CD8-positive, alpha-beta memory T cell (primary cell): ENCODE measurements at regions of chrX and their contacts with region 1.

Region 1: DNA sequence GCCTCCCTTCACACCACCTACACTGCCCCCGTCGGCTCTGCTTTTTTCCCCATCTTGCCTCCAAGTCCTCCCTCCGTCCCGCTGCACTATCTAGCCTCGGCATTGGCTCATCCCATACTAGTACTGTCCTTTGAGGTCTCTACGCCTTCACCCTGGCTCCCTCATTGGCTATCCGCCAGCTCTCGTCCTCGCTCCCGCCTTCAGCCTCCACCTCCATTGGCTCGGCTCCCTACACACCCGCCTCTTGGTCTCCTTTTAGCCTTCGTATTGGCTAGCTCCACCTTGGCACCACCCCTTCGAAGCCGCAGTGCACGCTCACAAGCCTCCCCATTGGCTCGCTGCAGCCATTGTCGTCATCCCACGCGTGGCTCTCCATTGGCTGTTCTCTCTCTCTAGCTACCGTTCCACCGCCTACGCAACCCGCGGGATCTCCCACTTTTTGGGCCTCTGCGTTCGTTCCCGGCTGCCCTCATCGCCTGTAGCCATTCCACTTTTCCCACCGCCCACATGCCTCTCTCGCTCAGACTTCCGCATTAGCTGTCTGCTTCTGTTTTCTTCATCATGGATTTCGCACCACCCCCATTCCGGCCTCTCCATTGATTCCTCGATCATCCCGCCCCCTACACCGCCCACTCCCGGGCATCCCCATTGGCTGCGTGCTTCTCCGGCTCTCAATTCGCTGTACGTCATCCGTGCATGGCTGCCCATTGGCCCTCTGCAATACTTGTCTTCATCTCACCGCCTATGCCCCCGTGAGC is 404 bp upstream of the PPP1R3F start:
- DNase-seq: peak; percentile 88 to 97 (median 95)
- H3K4me3 ChIP-seq: peak overlapping the region; percentile 82
- H3K4me3 Mint-ChIP-seq: peak overlapping the region; percentile 90 to 99 (median 96)
- H3K27ac ChIP-seq: peak overlapping the region; percentile 99
- H3K27ac Mint-ChIP-seq: peak overlapping the region; percentile 99 to 100 (median 100)
- H3K4me1 ChIP-seq: peaks cover 34% of the 10 kb centered on the region
- H3K4me1 Mint-ChIP-seq: peaks cover 48 to 62% (median 57%) of the 10 kb centered on the region in 3 donors
- H3K27me3 ChIP-seq: no peaks in the 10 kb centered on the region
- H3K27me3 Mint-ChIP-seq: peaks cover 0 to 3% of the 10 kb centered on the region in 2 donors

Region 2: GRCh38 chrX:49237060-49237459 is 32.1 kb before region 1 on chrX:
- CTCF ChIA-PET with region 1: interaction called, 3 read pairs
- POLR2A ChIA-PET with region 1: interaction called, 10 read pairs
- DNase-seq: no peak
- H3K4me3 ChIP-seq: peak overlapping the region; percentile 26
- H3K4me3 Mint-ChIP-seq: peak overlapping the region; percentile 61 to 94 (median 90)
- H3K27ac ChIP-seq: peak overlapping the region; percentile 44
- H3K27ac Mint-ChIP-seq: peak overlapping the region; percentile 28 to 89 (median 85)
- H3K4me1 ChIP-seq: peaks cover 24% of the 10 kb centered on the region
- H3K4me1 Mint-ChIP-seq: peaks cover 16 to 36% (median 27%) of the 10 kb centered on the region in 3 donors
- H3K27me3 ChIP-seq: no peaks in the 10 kb centered on the region
- H3K27me3 Mint-ChIP-seq: no peaks in the 10 kb centered on the region

Region 3: DNA sequence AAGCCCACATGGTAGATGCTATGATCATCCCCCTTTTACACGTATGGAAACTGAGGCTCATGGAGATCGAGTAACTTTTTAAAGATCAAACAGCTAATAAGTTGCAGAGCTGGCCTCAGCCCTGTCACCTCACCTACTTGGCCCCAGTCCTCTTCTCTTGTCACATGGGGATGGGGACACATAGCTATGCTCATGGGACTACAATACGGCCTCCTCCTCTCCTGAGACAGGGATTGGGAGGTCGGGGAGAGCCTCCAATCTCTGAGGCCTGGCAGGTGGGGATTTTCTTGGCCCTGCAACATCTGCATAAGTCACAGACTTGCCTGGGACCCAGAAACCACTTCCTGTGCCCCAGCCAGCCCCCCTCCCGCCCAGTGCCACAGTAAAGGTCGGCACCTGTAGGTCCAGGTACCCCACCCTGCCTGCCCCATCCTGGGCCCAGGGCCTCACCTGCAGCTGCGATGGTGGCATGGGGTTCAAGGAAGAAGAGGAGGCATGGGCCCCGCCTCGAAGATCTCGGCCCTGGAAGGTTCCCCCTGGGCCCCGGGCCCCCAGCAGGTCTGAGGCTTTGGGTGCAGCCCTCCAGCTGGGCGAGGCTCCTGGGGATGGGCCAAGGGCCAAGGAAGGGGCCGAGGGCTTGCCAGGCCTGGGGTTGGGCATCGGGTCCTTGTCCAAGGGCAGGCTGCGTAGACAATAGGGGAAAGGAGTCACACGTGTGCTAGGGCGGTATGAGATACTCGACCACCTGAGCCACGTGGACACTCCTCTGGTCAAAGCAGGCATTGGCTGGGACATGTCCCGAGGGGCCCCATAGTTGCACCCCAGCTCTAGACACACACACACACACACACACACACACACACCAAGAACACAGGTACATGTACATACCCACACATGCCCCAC is 11.1 kb before region 1 on chrX:
- CTCF ChIA-PET with region 1: interaction called, 10 read pairs
- POLR2A ChIA-PET with region 1: interaction called, 5 read pairs
- DNase-seq: no peak
- H3K4me3 ChIP-seq: no peak overlapping the region
- H3K4me3 Mint-ChIP-seq: peak overlapping the region in 6 of 7 donors; percentile 10 to 54 (median 32)
- H3K27ac ChIP-seq: no peak overlapping the region
- H3K27ac Mint-ChIP-seq: peak overlapping the region in 7 of 8 donors; percentile 23 to 86 (median 64)
- H3K4me1 ChIP-seq: peaks cover 26% of the 10 kb centered on the region
- H3K4me1 Mint-ChIP-seq: peaks cover 16 to 46% (median 18%) of the 10 kb centered on the region in 3 donors
- H3K27me3 ChIP-seq: no peaks in the 10 kb centered on the region
- H3K27me3 Mint-ChIP-seq: peaks cover 0 to 1% of the 10 kb centered on the region in 2 donors